Aorta (tissue), 5 donors: ENCODE measurements at regions of chr9 and their contacts with region 1.

Region 1: GRCh38 chr9:118522093-118523028 is 818.2 kb downstream of the TLR4 start:
- DNase-seq: peak; percentile 59 to 74
- ATAC-seq: no peak
- H3K4me3 ChIP-seq: no peak overlapping the region
- H3K27ac ChIP-seq: no peak overlapping the region
- H3K4me1 ChIP-seq: no peaks in the 10 kb centered on the region
- H3K27me3 ChIP-seq: no peaks in the 10 kb centered on the region

Region 2: GRCh38 chr9:118446943-118447639 is 75.3 kb before region 1 on chr9:
- intact Hi-C with region 1: no loop called
- DNase-seq: no peak
- ATAC-seq: no peak
- H3K4me3 ChIP-seq: no peak overlapping the region
- H3K27ac ChIP-seq: no peak overlapping the region
- H3K4me1 ChIP-seq: no peaks in the 10 kb centered on the region
- H3K27me3 ChIP-seq: peaks cover 0 to 2% of the 10 kb centered on the region in 2 donors

Region 3: GRCh38 chr9:118577121-118577520 is 54.8 kb after region 1 on chr9:
- intact Hi-C with region 1: loop called in 1 of 2 experiments (anchors 2 kb)
- DNase-seq: no peak
- ATAC-seq: no peak
- H3K4me3 ChIP-seq: no peak overlapping the region
- H3K27ac ChIP-seq: no peak overlapping the region
- H3K4me1 ChIP-seq: no peaks in the 10 kb centered on the region
- H3K27me3 ChIP-seq: no peaks in the 10 kb centered on the region

Region 4: DNA sequence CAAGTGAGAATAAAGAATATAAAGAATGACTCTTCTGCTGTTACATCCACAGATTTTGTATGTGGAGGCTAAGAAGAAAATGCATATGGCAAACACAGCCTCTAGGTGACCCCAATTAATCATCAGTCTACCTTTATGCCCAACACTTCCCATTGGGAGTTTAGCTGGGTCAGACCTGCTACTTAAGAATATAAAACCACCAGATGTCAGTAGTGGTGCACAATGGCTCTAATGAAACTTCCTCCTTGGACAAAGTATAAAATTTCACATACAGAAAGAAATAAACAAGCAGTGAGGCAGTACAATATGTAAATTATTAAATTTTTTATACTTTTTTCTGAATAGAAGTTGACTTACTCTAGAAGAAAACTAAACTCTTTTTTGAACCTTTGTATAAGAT is 307.0 kb after region 1 on chr9:
- intact Hi-C with region 1: loop called in 1 of 2 experiments (anchors 5 kb)
- DNase-seq: no peak
- ATAC-seq: peak; percentile 59
- H3K4me3 ChIP-seq: no peak overlapping the region
- H3K27ac ChIP-seq: no peak overlapping the region
- H3K4me1 ChIP-seq: no peaks in the 10 kb centered on the region
- H3K27me3 ChIP-seq: no peaks in the 10 kb centered on the region

Region 5: DNA sequence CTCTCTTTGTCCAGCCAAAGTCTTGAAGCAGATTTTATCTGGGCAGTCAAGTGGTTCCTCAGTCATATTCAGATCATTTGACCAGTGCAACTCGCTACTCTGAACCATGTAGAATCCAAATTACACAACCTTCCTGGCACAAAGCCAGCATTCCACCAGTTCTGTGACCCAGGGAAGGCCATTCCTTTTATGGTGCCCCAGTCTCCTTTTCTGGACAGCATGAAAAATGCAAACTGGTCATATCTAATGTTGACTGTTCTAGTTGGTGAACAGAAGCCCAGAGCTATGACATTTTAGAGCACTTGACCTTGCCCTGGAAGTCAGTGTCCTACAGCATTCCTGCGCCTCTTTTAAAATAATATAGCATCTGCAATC is 482.2 kb after region 1 on chr9:
- intact Hi-C with region 1: loop called in 1 of 2 experiments (anchors 10 kb)
- DNase-seq: peak; percentile 76 to 82
- ATAC-seq: peak; percentile 92
- H3K4me3 ChIP-seq: no peak overlapping the region
- H3K27ac ChIP-seq: peak overlapping the region; percentile 94 to 95
- H3K4me1 ChIP-seq: peaks cover 0 to 3% of the 10 kb centered on the region in 2 donors
- H3K27me3 ChIP-seq: no peaks in the 10 kb centered on the region

Region 6: GRCh38 chr9:119289740-119290433 is 767.5 kb after region 1 on chr9:
- intact Hi-C with region 1: loop called (anchors 1 to 10 kb)
- DNase-seq: no peak
- ATAC-seq: peak; percentile 79
- H3K4me3 ChIP-seq: no peak overlapping the region
- H3K27ac ChIP-seq: no peak overlapping the region
- H3K4me1 ChIP-seq: no peaks in the 10 kb centered on the region
- H3K27me3 ChIP-seq: no peaks in the 10 kb centered on the region